ENCODE measurements at regions of chr1 and their contacts with region 1.

Region 1: DNA sequence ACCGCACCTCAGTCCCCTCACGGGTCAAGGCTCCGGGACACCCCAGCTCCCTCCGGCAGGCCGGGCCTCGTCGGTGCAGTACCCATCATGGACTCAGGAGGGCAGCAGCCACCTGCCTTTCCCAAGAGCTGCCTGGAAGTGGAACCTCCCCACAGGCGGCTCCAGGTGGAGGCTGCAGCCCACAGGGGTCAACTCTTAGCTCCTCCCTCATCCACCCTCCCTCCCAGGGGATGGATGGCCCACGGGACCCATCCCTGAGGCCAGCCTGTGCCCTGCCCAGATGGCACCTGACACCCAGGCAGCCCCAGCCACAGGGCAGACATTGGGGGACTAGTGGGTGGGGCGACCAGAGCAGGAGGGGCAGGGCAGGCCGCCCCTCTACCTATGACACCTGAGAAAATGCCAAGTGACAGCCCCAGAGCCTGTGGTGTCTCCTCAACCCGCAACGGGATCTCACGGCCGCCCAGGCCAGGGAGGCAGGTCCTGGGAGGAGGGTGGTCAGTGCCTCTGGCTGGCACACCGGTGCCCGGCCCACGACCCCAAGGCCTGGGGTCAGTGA is 1.2 kb upstream of the ARHGEF16 start:
- DNase-seq: peak; percentile 93
- H3K4me3 ChIP-seq: no peak overlapping the region; a peak in 1 of 4 replicates
- H3K27ac ChIP-seq: no peak overlapping the region
- H3K4me1 ChIP-seq: peaks cover 0 to 14% of the 10 kb centered on the region in 2 experiments; a peak in 1 of 4 replicates
- H3K27me3 ChIP-seq: no peaks in the 10 kb centered on the region
- CTCF ChIP-seq: peak; percentile 75
- EP300 ChIP-seq: no peak
- RAD21 ChIP-seq: peak; percentile 92

Region 2: GRCh38 chr1:3410142-3410925 is 42.9 kb before region 1 on chr1:
- CTCF ChIA-PET with region 1: no interaction called
- POLR2A ChIA-PET with region 1: no interaction called
- DNase-seq: peak; percentile 86
- H3K4me3 ChIP-seq: no peak overlapping the region
- H3K27ac ChIP-seq: no peak overlapping the region
- H3K4me1 ChIP-seq: no peaks in the 10 kb centered on the region
- H3K27me3 ChIP-seq: peaks cover 27% of the 10 kb centered on the region; the same call in 1 of the 2 replicates
- CTCF ChIP-seq: peak; percentile 64
- EP300 ChIP-seq: no peak
- RAD21 ChIP-seq: peak; percentile 67

Region 3: DNA sequence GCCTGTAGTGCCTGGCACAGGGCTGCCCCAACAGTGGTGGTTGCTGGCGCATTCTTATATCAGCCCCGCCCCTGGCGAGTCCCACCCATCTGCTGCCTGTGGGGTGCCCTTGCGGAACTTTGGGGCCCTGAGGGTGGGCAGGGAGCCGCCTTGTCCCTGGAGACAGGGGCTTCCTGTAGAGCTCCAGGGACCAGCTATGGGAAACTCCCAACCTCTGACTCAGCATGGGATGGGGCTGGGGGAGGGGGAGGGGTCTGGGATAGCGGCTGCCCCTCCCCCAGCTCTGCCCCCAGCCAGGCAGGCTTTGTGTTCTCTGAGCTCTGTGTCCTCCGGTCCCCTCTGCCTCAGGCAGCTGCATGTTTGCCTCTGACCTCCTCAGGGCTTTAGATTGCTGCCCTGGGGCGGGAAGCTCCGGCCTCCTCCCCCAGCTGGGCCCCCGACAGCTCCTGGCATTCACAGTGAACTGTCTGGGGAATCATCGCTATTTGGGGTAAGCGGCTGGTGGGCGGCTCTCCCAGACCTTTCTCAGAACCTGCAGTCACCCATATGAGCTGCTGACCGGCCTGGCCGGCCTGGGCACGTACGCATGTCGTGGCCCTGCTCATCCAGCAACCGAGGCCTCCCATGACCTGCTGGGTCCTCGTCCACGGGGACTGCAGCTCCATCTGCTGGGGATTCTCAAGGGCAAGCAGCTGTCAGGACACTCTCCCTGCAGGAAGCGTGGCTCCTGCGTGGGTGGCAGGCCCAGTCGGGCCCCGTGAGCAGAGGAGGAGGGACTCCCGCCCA is 18.2 kb after region 1 on chr1:
- CTCF ChIA-PET with region 1: interaction called, 114 read pairs
- POLR2A ChIA-PET with region 1: no interaction called
- DNase-seq: peak; percentile 73
- H3K4me3 ChIP-seq: no peak overlapping the region
- H3K27ac ChIP-seq: no peak overlapping the region
- H3K4me1 ChIP-seq: peaks cover 0 to 7% of the 10 kb centered on the region in 2 experiments; a peak in 2 of 4 replicates
- H3K27me3 ChIP-seq: no peaks in the 10 kb centered on the region
- CTCF ChIP-seq: peak; percentile 28
- EP300 ChIP-seq: no peak
- RAD21 ChIP-seq: peak; percentile 45

Region 4: DNA sequence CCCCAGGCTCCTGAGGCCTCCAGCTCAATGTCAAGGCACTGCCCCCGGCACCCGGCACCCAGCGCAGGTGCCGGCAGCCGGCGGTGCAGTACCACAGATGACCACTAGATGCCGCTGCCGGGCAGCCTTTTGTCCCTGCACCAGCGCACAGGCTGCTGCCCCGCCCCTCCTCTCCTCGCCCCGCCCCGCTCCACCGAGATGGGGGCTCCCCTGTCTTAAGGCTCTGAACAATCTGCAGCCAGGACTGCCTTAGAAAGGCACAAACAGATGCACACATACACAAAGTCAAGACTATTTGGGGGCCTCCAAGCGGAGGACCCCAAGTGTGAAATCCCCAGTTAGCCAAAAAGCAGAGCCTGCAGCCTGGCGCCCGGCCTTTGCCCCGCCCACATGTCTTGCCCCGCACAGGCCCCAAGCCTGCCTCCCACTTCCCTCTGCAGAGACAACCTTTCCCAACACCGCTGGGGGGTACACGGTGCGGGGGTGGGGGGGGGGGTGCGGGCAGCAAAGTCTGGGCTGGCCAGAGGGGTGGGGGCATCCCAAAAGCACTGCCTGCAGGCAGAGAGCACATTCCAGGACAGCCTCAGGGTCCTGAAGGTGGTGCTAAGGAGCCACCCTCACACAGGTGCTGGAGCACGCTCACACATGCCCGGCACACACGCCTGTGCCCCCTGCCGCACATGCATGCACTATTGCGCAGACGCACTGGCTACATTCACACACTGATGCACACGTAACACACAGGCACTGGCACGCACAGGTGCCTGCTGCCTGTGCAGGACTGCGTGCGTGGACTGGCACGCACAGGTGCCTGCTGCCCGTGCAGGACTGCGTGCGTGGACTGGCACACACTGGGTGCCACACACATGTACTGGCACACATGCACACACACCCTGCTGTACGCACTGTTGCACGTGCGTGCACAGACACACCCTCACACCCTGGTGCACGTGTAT is 38.3 kb after region 1 on chr1:
- CTCF ChIA-PET with region 1: interaction called, 72 read pairs
- POLR2A ChIA-PET with region 1: no interaction called
- DNase-seq: peak; percentile 95
- H3K4me3 ChIP-seq: peak overlapping the region; percentile 27 to 32; a peak in 3 of 4 replicates
- H3K27ac ChIP-seq: no peak overlapping the region
- H3K4me1 ChIP-seq: peaks cover 4% of the 10 kb centered on the region in 2 experiments; a peak in 1 of 4 replicates
- H3K27me3 ChIP-seq: no peaks in the 10 kb centered on the region
- CTCF ChIP-seq: peak; percentile 82
- EP300 ChIP-seq: no peak
- RAD21 ChIP-seq: peak; percentile 87

Region 5: GRCh38 chr1:3553166-3553939 is 100.1 kb after region 1 on chr1:
- CTCF ChIA-PET with region 1: interaction called, 13 read pairs
- POLR2A ChIA-PET with region 1: no interaction called
- DNase-seq: peak; percentile 76
- H3K4me3 ChIP-seq: no peak overlapping the region
- H3K27ac ChIP-seq: no peak overlapping the region; a peak in 1 of 4 replicates
- H3K4me1 ChIP-seq: peaks cover 0 to 58% of the 10 kb centered on the region in 2 experiments; a peak in 1 of 4 replicates
- H3K27me3 ChIP-seq: no peaks in the 10 kb centered on the region
- CTCF ChIP-seq: no peak
- EP300 ChIP-seq: no peak
- RAD21 ChIP-seq: no peak

Region 6: DNA sequence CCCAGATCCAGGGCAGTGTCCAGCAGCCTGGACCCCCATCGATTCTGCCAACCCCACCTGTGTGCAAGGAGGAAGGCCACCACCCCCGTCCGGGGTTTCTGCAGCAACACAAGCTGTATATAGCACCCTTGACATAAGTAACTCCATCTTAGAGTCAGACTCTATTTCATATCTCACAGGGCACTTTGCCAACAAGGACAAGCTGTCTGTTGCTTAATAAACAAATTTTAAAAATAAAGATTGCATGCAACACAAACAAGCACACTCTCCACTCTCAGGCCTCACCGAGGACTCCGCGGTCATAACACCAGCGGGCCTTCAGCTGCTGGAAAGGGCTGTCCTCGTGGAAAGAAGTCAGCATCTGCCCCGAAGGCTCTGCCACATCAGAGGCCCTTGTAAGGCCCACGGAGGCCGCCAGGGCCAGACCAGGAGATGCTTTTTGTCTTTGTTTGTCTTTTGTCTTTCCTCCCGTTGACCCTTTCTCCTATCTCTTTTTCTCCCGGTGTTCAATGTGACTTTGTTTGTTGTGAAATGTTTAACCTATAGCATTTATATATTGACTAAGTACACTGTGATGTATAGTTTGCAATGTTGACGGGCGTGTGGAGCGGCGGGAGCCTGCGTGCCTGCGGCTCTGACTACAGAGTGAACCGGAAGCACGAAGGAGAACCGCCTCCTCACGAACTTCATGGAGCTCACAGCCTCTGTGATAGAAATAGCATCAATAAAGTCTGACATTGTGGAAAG is 133.8 kb after region 1 on chr1:
- CTCF ChIA-PET with region 1: interaction called, 10 read pairs
- POLR2A ChIA-PET with region 1: no interaction called
- DNase-seq: no peak
- H3K4me3 ChIP-seq: no peak overlapping the region
- H3K27ac ChIP-seq: no peak overlapping the region
- H3K4me1 ChIP-seq: peaks cover 0 to 13% of the 10 kb centered on the region in 2 experiments; a peak in 1 of 4 replicates
- H3K27me3 ChIP-seq: no peaks in the 10 kb centered on the region
- CTCF ChIP-seq: no peak
- EP300 ChIP-seq: no peak
- RAD21 ChIP-seq: no peak

Region 7: GRCh38 chr1:3631330-3632262 is 178.3 kb after region 1 on chr1:
- CTCF ChIA-PET with region 1: interaction called, 21 read pairs
- POLR2A ChIA-PET with region 1: interaction called, 3 read pairs
- DNase-seq: no peak
- H3K4me3 ChIP-seq: no peak overlapping the region
- H3K27ac ChIP-seq: no peak overlapping the region; a peak in 1 of 4 replicates
- H3K4me1 ChIP-seq: peaks cover 0 to 19% of the 10 kb centered on the region in 2 experiments; a peak in 2 of 4 replicates
- H3K27me3 ChIP-seq: no peaks in the 10 kb centered on the region
- CTCF ChIP-seq: no peak
- EP300 ChIP-seq: no peak
- RAD21 ChIP-seq: no peak